HCT116 (cell line): ENCODE measurements at regions of chr4 and their contacts with region 1.

Region 1: GRCh38 chr4:83548151-83548905 is 12.4 kb downstream of the GPAT3 start:
- DNase-seq: peak; percentile 99
- ATAC-seq: peak; percentile 85
- H3K4me3 ChIP-seq: peak overlapping the region in 1 of 2 experiments; percentile 38; a peak in 2 of 4 replicates
- H3K27ac ChIP-seq: peak overlapping the region; percentile 73
- H3K4me1 ChIP-seq: peaks cover 40 to 64% of the 10 kb centered on the region in 2 experiments
- H3K27me3 ChIP-seq: no peaks in the 10 kb centered on the region
- CTCF ChIP-seq: no peak
- POLR2A ChIP-seq: no peak
- RAD21 ChIP-seq: no peak; the same call in 1 of the 2 replicates

Region 2: DNA sequence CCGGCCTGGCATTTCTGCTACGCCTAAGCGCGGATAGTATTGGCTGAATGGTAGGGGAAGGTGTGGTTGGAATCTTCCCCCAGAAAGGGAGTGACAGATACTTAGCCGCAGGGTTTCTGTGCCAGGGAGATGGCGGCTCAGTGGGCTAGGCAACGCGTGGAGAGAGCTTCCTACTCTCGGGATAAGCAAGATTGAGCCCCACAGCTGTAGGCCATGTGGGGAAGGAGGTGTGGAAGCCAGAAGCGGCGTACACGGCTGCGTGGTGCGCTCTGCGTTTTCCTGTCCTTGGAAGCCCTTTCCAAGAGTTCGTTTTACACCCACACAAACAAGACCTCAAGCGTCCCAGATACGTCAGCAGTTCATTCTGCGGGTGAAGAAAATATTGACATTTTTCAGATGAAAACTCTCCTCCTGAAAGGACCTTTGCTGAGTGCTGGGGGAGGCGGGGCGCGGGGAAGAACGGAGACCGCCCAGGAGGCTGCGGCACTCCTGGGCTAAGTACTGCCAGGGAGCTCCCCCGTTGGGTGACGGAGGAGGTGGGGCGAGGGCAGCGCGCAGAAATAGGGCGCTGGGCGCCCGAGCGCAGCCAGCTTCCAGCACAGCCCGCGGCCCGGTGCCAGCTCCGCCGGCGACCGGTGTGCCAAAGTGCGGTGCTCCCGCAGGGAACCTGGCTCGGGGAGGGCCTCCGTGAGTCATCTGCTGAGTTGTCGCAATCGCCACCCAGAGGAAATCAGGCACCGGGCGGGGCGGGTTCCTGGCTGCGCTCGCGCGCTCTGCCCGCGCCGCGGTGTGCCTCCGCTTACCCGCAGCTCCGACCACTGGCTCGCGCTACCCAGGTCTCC is 12.6 kb before region 1 on chr4 and contains the start of gene GPAT3:
- CTCF ChIA-PET with region 1: interaction called, 3 read pairs
- POLR2A ChIA-PET with region 1: interaction called, 11 read pairs
- RAD21 ChIA-PET with region 1: no interaction called
- intact Hi-C with region 1: no loop called
- DNase-seq: peak; percentile 75
- ATAC-seq: peak; percentile 89
- H3K4me3 ChIP-seq: peak within 1 kb of the TSS; percentile 86 to 99
- H3K27ac ChIP-seq: peak within 1 kb of the TSS; percentile 71
- H3K4me1 ChIP-seq: peaks cover 7 to 34% of the 10 kb centered on the region in 2 experiments
- H3K27me3 ChIP-seq: no peaks in the 10 kb centered on the region
- CTCF ChIP-seq: no peak
- POLR2A ChIP-seq: no peak
- RAD21 ChIP-seq: no peak
- total RNA-seq, gene GPAT3: 36.7 TPM

Region 3: DNA sequence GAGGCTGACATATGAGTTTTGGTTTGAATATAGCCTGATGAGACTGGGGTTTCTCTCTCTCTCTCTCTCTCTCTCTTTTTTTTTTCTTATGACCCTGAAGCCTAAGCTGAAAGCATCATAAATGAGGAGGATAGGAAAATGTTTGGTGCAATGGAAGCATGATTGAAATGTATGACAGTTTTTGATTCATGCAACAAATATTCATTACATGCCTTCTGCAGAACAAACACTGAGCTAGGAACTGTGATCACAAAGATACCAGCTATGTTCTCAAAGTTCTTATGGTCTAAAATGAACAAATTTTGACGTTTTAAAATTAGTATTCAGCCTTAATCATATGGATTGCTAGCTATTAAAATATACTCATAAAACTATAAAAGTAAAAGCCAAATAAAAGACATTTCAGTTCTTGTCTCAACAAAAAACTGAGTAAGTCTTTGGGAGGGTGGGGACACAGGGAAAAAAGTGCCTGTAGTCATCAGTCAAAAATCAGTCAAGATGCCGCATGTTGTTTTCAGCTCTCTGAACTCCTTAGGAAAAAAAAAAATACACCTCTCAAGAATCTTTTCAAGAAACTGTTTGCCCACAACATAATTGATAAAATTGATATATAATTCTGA is 893.5 kb after region 1 on chr4:
- CTCF ChIA-PET with region 1: no interaction called
- POLR2A ChIA-PET with region 1: no interaction called
- RAD21 ChIA-PET with region 1: no interaction called
- intact Hi-C with region 1: no loop called
- DNase-seq: no peak
- ATAC-seq: no peak
- H3K4me3 ChIP-seq: no peak overlapping the region
- H3K27ac ChIP-seq: no peak overlapping the region
- H3K4me1 ChIP-seq: no peaks in the 10 kb centered on the region
- H3K27me3 ChIP-seq: peaks cover 13% of the 10 kb centered on the region; the same call in 1 of the 2 replicates
- CTCF ChIP-seq: no peak
- POLR2A ChIP-seq: no peak
- RAD21 ChIP-seq: no peak